ENCODE measurements at regions of chr3 and their contacts with region 1.

Region 1: DNA sequence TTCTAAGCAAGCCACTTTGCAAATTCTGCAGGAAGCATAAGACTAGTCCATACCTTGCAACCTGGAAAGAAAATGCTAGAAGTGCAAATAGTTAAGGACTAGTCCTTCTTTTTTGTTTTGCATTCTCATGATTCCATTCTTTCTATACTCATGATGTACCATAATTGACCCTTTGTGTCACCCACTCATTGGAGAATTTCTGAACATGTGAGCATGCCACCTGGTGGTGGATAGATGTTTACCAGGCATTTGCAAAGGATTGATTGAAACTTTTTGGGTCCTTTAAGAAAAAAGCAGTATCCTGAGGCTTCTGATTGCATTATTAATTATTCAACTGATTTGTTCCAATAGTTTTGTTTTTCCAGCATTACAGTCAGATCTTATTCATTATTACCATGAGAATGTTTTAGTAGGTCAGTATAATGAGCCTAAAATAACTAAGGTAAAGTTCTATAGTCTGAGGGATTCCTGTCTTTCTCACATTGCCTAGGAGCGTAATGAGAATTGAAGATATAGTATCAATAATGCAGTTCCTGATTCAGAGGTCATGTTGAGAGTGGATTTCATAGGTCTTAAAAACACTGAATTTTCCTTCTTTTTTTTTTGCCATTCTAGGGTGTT is 20.2 kb upstream of the DIPK2A start:
- DNase-seq: no peak
- ATAC-seq: no peak
- H3K4me3 ChIP-seq: no peak overlapping the region
- H3K27ac ChIP-seq: no peak overlapping the region
- H3K4me1 ChIP-seq: no peaks in the 10 kb centered on the region
- H3K27me3 ChIP-seq: no peaks in the 10 kb centered on the region

Region 2: GRCh38 chr3:143775459-143775858 is 176.0 kb before region 1 on chr3:
- intact Hi-C with region 1: loop called (anchors 5 kb)
- DNase-seq: no peak
- ATAC-seq: peak; percentile 65
- H3K4me3 ChIP-seq: peak overlapping the region in 1 of 2 donors; percentile 36
- H3K27ac ChIP-seq: no peak overlapping the region
- H3K4me1 ChIP-seq: peaks cover 2% of the 10 kb centered on the region in 2 donors
- H3K27me3 ChIP-seq: no peaks in the 10 kb centered on the region

Measured in aorta (tissue), 5 donors.